ENCODE measurements at regions of chr7 and their contacts with region 1.

Region 1: DNA sequence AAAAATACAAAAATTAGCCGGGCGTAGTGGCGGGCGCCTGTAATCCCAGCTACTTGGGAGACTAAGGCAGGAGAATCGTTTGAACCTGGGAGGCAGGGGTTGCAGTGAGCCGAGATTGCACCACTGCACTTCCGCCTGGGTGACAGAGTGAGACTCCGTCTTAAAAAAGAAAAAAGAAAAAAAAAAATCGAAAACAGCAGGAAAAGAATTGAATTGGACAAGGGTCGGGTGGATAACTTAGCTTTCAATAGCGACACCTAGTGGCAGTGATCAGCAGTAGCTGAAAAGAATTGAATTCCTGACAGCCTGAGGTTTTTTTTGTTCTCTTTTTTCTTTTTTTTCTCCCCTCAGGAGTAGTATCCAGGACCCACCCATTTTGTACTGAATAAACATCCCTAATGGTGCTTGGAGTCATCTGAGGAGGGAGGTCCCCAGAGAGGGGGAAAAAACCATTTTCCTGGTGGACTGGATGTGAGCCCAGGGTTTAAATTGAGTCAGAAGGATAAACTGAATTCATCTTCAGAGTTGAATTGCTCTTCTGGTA is 55.1 kb downstream of the CYCS start:
- DNase-seq: peak; percentile 45
- H3K4me3 Mint-ChIP-seq: no peak overlapping the region
- H3K27ac Mint-ChIP-seq: no peak overlapping the region
- H3K4me1 Mint-ChIP-seq: peaks cover 26% of the 10 kb centered on the region
- H3K27me3 Mint-ChIP-seq: no peaks in the 10 kb centered on the region

Region 2: DNA sequence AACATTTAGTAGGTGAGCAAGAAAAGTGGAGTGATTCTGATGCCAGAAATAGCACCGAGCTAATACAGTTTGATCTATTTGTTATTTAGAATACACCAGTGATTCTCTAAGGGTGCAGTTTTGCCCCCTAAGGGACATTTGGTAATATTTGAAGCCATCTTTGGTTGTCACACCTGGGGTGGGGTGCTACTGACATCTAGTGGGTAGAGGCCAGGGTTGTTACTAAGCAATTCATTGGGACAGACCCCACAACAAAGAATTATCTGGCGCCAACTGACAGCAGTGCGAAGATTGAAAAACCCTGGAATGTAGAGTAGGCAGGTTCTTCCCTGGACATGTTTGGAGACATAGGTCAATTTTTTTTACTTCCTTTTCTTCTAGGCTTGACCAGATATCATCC is 482.1 kb before region 1 on chr7:
- CTCF ChIA-PET with region 1: no interaction called
- POLR2A ChIA-PET with region 1: no interaction called
- intact Hi-C with region 1: no loop called
- DNase-seq: peak; percentile 48
- H3K4me3 Mint-ChIP-seq: no peak overlapping the region
- H3K27ac Mint-ChIP-seq: no peak overlapping the region
- H3K4me1 Mint-ChIP-seq: peaks cover 11% of the 10 kb centered on the region
- H3K27me3 Mint-ChIP-seq: no peaks in the 10 kb centered on the region

Region 3: DNA sequence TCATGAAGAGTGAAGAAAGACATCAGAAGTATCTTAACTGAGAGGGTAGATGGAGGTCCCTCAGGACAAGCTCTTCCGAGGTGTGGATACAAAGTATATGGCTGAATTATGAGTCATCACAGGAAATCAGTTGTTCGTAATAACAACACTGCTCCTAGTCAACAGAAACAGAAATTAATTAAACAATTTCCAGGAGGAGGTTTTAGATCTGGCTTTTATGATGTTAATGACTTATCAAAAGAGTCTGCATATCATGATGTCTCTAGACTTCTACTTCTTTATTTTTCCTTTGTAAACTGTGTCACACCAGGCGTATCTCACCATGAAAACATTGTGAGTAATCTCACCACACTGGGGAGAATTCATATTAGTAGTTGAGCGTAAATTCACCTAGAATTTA is 121.2 kb before region 1 on chr7:
- CTCF ChIA-PET with region 1: no interaction called
- POLR2A ChIA-PET with region 1: no interaction called
- intact Hi-C with region 1: no loop called
- DNase-seq: no peak
- H3K4me3 Mint-ChIP-seq: no peak overlapping the region
- H3K27ac Mint-ChIP-seq: peak overlapping the region; percentile 3
- H3K4me1 Mint-ChIP-seq: peaks cover 59% of the 10 kb centered on the region
- H3K27me3 Mint-ChIP-seq: no peaks in the 10 kb centered on the region

Region 4: DNA sequence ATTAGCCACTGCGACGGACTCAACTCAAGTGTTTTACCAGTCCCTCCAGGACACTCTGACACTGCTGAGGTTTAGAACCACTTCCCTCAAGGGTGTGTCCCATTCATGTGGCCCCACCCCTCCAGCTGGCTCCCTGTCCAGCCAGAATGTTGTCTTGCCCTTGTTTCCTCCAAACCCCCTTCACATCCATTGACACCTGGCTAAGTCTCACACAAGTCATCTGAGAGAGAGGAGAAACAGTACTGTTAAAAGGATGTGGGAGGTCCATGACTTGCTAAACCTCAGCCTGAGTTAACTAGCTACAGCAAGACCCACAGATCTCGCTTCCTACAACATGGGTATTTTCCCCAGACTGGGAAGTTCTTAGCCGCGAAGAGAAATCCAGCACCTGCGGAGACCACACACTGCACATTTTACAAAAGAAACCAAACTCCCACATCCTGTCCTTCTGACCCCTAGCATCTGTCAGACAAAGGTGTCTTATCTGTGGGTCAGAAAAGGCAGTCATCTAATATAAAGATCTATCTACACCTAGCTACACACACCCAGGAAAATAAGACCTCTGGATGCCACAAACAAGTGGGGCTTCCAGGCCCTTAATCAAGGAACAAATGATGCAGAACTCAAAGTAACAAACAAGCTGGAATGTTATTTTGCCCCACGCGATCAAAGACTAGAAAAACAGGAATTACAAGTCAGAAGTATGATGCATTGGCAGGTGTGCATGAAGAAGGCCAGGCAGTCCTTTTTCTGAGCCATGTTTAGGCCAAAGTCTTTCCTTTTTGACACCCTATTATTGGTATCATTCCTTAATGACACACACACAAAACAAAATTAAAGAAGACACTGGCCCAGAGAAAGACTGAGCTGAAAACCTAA is 103.9 kb before region 1 on chr7:
- CTCF ChIA-PET with region 1: interaction called, 3 read pairs
- POLR2A ChIA-PET with region 1: no interaction called
- intact Hi-C with region 1: loop called (anchors 5 kb)
- DNase-seq: peak; percentile 61
- H3K4me3 Mint-ChIP-seq: peak overlapping the region; percentile 36
- H3K27ac Mint-ChIP-seq: peak overlapping the region; percentile 80
- H3K4me1 Mint-ChIP-seq: peaks cover 82% of the 10 kb centered on the region
- H3K27me3 Mint-ChIP-seq: no peaks in the 10 kb centered on the region

Region 5: DNA sequence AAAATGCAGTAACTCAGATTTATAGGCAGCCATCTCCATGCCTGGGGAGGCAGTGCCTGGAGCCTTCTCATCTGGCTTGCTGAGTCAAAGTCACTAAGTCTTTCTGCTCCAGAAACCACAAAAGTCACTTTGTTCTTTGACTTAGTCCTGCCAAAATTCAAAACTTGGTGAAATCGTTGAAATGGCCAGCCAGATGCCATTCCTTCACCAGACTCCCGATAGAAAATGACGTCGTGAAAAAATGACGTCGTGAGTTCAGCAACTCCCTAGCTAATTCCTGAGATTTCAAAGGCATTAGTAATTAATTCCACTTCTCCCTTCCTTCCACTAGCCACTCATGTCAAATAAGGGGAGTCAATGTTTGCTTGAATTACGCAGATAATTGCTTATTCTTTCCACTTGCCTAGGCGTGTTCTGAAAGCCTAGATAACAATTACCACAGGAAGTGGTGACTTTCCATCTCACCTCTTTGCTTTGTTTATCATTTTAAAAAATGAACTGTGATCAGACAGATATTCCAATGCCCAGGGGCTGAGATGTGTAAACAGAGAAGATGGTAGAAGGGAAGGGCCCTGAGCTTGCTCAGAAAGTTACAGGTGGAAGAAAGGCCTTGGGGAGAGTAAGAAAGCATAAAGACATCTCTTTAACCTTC is 41.5 kb before region 1 on chr7:
- CTCF ChIA-PET with region 1: interaction called, 6 read pairs
- POLR2A ChIA-PET with region 1: no interaction called
- intact Hi-C with region 1: loop called (anchors 2 kb)
- DNase-seq: peak; percentile 42
- H3K4me3 Mint-ChIP-seq: peak overlapping the region; percentile 0
- H3K27ac Mint-ChIP-seq: peak overlapping the region; percentile 70
- H3K4me1 Mint-ChIP-seq: peaks cover 48% of the 10 kb centered on the region
- H3K27me3 Mint-ChIP-seq: no peaks in the 10 kb centered on the region

Measured in activated CD4-positive, alpha-beta memory T cell treated with anti-CD3 and anti-CD28 coated beads for 36 hours (primary cell).